GM12878 (cell line): ENCODE measurements at regions of chr14 and their contacts with region 1.

Region 1: GRCh38 chr14:89973234-89973823 is 17.6 kb downstream of the TDP1 start:
- DNase-seq: peak; percentile 4
- ATAC-seq: peak; percentile 87
- H3K4me3 ChIP-seq: no peak overlapping the region
- H3K27ac ChIP-seq: no peak overlapping the region
- H3K4me1 ChIP-seq: no peaks in the 10 kb centered on the region
- H3K27me3 ChIP-seq: no peaks in the 10 kb centered on the region
- CTCF ChIP-seq: peak; percentile 71 to 87 (median 84)
- EP300 ChIP-seq: no peak
- POLR2A ChIP-seq: no peak
- RAD21 ChIP-seq: peak; percentile 59

Region 2: GRCh38 chr14:89719366-89720073 is 253.8 kb before region 1 on chr14:
- CTCF ChIA-PET with region 1: no interaction called
- POLR2A ChIA-PET with region 1: no interaction called
- RAD21 ChIA-PET with region 1: no interaction called
- SMC1A ChIA-PET with region 1: no interaction called
- in situ Hi-C with region 1: no loop called
- intact Hi-C with region 1: no loop called
- DNase-seq: no peak
- ATAC-seq: peak; percentile 70
- H3K4me3 ChIP-seq: no peak overlapping the region
- H3K27ac ChIP-seq: no peak overlapping the region
- H3K4me1 ChIP-seq: peaks cover 24% of the 10 kb centered on the region
- H3K27me3 ChIP-seq: no peaks in the 10 kb centered on the region
- CTCF ChIP-seq: no peak
- EP300 ChIP-seq: no peak
- POLR2A ChIP-seq: no peak
- RAD21 ChIP-seq: no peak

Region 3: DNA sequence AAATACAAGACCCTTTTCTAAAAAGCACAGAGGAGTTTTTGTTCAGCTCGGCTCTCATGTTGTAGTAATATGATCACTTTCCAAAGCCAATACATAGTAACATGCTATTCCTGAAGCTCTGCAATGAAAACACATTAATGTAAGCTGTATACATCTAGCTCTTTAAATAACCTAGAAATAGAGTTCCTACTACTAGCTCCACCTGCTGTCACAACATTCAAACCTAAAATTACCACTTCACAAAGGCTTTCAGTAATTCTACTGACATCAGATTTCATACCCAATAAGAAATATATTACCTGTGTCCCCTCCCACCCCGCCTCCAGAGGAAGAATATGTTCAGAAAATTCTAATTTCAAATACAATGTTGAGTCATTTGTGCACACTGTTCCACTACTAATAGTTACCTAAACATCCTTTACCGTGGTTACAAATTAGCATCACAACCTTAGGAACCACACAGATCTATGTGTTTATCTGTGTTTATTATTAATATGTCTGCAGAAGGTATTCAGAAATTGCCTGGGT is 36.6 kb before region 1 on chr14:
- CTCF ChIA-PET with region 1: interaction called, 50 read pairs
- POLR2A ChIA-PET with region 1: no interaction called
- RAD21 ChIA-PET with region 1: interaction called, 9 read pairs
- SMC1A ChIA-PET with region 1: interaction called, 11 read pairs
- in situ Hi-C with region 1: no loop called
- intact Hi-C with region 1: no loop called
- DNase-seq: no peak
- ATAC-seq: no peak
- H3K4me3 ChIP-seq: no peak overlapping the region
- H3K27ac ChIP-seq: no peak overlapping the region
- H3K4me1 ChIP-seq: no peaks in the 10 kb centered on the region
- H3K27me3 ChIP-seq: no peaks in the 10 kb centered on the region
- CTCF ChIP-seq: no peak; a peak in 1 of 6 replicates
- EP300 ChIP-seq: no peak
- POLR2A ChIP-seq: no peak
- RAD21 ChIP-seq: no peak

Region 4: DNA sequence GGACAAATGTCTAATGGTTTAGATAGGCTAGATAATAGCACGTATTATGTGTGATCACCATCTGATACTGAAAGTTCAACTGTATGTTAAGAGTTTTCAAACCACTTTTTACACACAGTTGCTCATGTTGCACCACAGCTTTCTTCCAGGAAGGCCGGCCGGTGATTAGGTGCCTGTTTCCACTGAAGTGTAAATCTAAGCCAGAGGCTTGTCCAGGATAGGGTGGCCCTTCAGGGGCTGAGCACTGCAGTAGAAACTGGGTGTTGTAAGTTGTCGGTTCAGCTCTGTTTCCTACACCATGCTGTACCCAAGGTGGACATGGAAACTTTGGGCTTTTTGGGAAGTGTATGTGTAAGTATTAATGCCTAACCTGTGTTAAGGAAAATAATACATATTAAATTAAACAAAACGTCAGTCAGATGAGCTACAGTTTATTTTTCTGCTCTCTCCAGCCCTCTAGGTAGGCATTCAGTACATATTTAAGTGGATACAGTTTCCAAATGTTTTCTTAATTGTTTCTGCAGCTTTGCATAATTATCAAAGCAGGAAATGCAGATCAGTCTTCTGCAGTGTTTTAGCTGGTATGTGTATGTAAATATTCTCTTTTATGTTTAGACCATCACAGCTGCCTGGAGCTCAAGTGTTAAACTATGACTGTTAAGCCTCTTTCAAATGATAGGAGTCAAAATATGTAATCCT is 13.3 kb after region 1 on chr14:
- CTCF ChIA-PET with region 1: interaction called, 29 read pairs
- POLR2A ChIA-PET with region 1: no interaction called
- RAD21 ChIA-PET with region 1: interaction called, 3 read pairs
- SMC1A ChIA-PET with region 1: interaction called, 7 read pairs
- in situ Hi-C with region 1: no loop called
- intact Hi-C with region 1: no loop called
- DNase-seq: no peak
- ATAC-seq: no peak
- H3K4me3 ChIP-seq: no peak overlapping the region
- H3K27ac ChIP-seq: no peak overlapping the region
- H3K4me1 ChIP-seq: no peaks in the 10 kb centered on the region
- H3K27me3 ChIP-seq: no peaks in the 10 kb centered on the region
- CTCF ChIP-seq: no peak
- EP300 ChIP-seq: no peak
- POLR2A ChIP-seq: no peak
- RAD21 ChIP-seq: no peak

Region 5: GRCh38 chr14:90034835-90035525 is 61.7 kb after region 1 on chr14:
- CTCF ChIA-PET with region 1: no interaction called
- POLR2A ChIA-PET with region 1: interaction called, 10 read pairs
- RAD21 ChIA-PET with region 1: no interaction called
- SMC1A ChIA-PET with region 1: no interaction called
- in situ Hi-C with region 1: no loop called
- intact Hi-C with region 1: no loop called
- DNase-seq: peak; percentile 16
- ATAC-seq: peak; percentile 75
- H3K4me3 ChIP-seq: no peak overlapping the region
- H3K27ac ChIP-seq: peak overlapping the region; percentile 39
- H3K4me1 ChIP-seq: peaks cover 7% of the 10 kb centered on the region
- H3K27me3 ChIP-seq: no peaks in the 10 kb centered on the region
- CTCF ChIP-seq: no peak
- EP300 ChIP-seq: no peak
- POLR2A ChIP-seq: no peak
- RAD21 ChIP-seq: no peak

Region 6: DNA sequence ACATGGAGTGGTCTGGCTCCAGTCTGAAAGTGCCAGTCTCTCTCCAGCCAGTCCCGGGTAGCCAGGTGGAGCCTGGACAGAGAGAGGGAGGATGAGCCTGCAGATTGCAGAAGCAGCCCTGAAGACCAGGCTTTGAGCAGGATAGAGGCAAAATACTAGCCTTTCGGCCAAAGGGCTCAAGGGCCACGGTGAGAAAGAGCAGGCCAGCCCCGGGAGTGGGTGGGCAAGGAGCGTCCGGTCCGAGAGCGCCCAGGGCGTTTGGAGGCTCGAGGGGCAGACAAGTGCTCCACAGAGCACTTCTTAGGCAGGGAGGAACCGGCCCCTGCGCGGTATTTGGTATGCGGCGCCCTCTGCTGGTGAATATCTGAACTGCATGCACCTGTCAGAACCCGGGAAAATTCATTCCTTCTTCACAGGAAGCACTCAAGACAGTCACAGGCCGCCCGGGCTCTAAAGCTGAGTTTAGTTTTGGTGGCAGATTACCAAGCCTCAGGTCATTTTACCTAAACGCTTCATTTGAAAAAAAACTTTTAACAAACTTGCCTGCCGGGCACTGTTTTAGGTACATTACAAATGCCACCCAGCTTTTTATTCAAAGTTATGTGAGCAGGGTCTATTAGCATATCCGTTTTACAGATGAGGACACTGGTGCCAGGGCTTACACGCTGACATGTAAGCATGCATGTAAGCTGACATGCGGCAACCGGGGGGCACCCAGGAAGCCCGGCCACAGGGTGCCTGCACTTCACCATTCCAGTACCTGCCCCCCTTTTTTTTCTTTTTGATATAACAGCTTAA is 262.0 kb after region 1 on chr14:
- CTCF ChIA-PET with region 1: interaction called, 37 read pairs
- POLR2A ChIA-PET with region 1: no interaction called
- RAD21 ChIA-PET with region 1: interaction called, 24 read pairs
- SMC1A ChIA-PET with region 1: interaction called, 4 read pairs
- in situ Hi-C with region 1: loop called (anchors 10 kb)
- intact Hi-C with region 1: loop called (anchors 1 kb)
- DNase-seq: no peak
- ATAC-seq: peak; percentile 91
- H3K4me3 ChIP-seq: no peak overlapping the region
- H3K27ac ChIP-seq: no peak overlapping the region
- H3K4me1 ChIP-seq: no peaks in the 10 kb centered on the region
- H3K27me3 ChIP-seq: no peaks in the 10 kb centered on the region
- CTCF ChIP-seq: peak; percentile 83 to 96 (median 89)
- EP300 ChIP-seq: no peak
- POLR2A ChIP-seq: no peak
- RAD21 ChIP-seq: peak; percentile 78